ENCODE measurements at regions of chr2 and their contacts with region 1.

Region 1: GRCh38 chr2:38146275-38146906 is 70.4 kb upstream of the CYP1B1 start:
- DNase-seq: peak; percentile 86
- H3K4me3 Mint-ChIP-seq: peak overlapping the region; percentile 20
- H3K27ac Mint-ChIP-seq: no peak overlapping the region
- H3K4me1 Mint-ChIP-seq: peaks cover 5% of the 10 kb centered on the region
- H3K27me3 Mint-ChIP-seq: no peaks in the 10 kb centered on the region
- CTCF ChIP-seq: no peak

Region 2: DNA sequence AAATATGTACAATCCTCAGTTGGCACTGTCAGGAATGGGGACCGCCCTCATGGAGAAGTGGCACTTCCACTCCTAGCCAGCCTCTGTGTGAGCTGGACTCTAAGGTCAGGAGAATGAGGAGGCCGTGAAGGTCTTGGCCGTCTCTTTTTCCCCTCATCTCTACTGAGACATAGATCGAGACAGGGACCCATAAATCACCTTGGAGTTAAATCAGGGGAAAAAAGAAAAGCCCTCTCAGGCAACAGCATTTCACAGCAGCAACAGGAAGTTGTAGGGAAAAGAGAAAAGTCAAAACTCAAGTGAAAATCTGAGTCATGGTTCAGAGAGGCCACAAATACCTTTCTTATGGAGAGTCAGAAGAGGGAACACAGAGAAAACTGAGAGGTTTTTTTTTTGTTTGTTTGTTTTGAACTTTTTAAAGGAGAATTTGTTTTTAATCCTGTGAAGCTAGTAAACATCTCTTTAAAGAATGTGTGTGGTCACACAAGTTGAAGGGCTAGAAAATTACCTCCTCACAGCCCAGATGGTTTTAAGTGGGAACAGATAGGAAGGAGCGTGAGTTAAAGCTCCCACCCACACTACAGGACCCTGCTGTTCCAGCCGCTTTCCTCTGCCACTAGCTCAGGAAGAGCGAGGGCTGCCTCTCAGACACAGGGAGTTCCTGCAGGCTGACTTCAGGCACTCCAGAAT is 39.8 kb before region 1 on chr2:
- CTCF ChIA-PET with region 1: no interaction called
- POLR2A ChIA-PET with region 1: interaction called, 21 read pairs
- intact Hi-C with region 1: no loop called
- DNase-seq: no peak
- H3K4me3 Mint-ChIP-seq: no peak overlapping the region
- H3K27ac Mint-ChIP-seq: peak overlapping the region; percentile 80
- H3K4me1 Mint-ChIP-seq: peaks cover 26% of the 10 kb centered on the region
- H3K27me3 Mint-ChIP-seq: no peaks in the 10 kb centered on the region
- CTCF ChIP-seq: no peak

Region 3: DNA sequence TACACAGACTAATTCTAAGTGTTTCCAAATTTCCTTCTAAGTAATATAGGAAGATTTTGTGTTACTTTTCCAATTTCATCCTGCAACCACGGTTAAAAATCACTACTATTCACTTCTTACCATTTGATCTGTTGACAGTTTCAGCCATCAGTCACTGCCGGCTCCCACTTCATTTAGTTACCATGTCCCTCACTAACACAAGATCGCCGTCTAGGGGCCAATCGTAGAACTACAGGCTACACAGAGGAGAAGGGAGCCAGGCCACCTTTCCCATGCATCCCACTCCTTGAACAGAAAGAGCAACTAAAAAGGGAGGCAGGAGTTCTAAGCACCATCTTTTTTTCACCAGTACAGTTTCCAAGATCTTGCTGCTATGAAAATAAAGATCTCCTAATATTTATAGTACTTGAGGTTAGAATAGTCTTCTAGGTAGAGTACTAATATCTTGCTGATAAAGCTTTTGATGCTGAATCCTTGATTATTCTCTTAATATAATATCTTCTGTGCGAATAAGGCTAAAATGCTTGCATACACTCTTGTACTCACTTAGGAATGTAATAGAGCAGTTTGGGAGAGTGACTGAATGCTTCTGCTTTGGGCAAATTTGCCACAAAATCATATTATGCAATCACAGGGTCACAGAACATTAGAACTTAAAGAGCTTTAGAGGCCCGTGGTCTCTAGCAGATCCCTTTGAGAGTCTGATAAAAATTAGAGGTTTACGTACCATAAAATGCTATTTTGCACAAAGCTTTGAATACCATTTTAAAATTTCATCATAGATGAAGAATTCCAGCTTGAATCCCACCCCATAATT is 31.0 kb before region 1 on chr2:
- CTCF ChIA-PET with region 1: interaction called, 4 read pairs
- POLR2A ChIA-PET with region 1: interaction called, 14 read pairs
- intact Hi-C with region 1: loop called (anchors 2 kb)
- DNase-seq: peak; percentile 94
- H3K4me3 Mint-ChIP-seq: no peak overlapping the region
- H3K27ac Mint-ChIP-seq: no peak overlapping the region
- H3K4me1 Mint-ChIP-seq: peaks cover 28% of the 10 kb centered on the region
- H3K27me3 Mint-ChIP-seq: no peaks in the 10 kb centered on the region
- CTCF ChIP-seq: peak; percentile 96

Region 4: DNA sequence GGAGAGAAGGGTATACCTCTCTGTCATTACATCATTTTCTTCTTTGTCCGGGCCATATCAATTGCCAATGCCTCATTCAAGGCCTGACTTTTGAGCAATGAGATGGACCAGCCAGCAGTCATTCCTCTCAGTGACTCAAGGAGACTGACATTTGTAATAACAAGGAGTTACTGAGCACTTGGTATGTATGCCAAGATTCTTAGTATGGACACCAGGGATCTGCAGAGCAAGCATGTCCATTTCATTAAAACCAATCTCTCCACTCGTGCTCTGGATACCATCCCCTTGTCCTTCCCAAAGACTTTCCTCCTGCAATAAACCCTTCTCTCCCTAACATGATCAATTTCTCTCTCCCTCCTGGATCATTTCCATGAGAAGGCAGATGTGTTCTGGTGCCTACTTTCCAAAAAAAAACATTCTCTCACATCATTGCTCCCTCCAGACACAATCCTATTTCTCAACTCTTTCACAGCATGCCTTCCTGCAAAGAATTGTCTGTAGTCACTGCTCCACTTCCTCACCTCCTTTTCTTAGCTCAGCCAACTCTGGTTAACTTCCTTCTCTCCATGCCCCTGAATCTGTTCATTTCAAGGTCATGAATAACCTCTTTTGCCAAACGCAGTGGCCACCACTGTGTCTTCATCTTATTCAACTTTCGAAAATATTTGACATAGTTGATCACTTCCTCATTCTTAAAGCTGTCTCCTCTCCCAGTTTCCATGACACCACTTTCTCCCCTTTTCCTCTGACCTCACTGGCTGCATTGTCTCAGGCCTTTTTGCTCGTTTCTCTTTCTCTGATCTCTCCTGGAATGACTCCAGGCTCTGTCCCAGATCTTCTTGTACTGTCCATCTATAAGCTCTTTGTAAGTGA is 32.4 kb after region 1 on chr2:
- CTCF ChIA-PET with region 1: interaction called, 3 read pairs
- POLR2A ChIA-PET with region 1: interaction called, 168 read pairs
- intact Hi-C with region 1: loop called (anchors 1 kb)
- DNase-seq: peak; percentile 83
- H3K4me3 Mint-ChIP-seq: peak overlapping the region; percentile 12
- H3K27ac Mint-ChIP-seq: peak overlapping the region; percentile 60
- H3K4me1 Mint-ChIP-seq: peaks cover 48% of the 10 kb centered on the region
- H3K27me3 Mint-ChIP-seq: no peaks in the 10 kb centered on the region
- CTCF ChIP-seq: no peak

Region 5: GRCh38 chr2:38185012-38185491 is 38.7 kb after region 1 on chr2:
- CTCF ChIA-PET with region 1: interaction called, 4 read pairs
- POLR2A ChIA-PET with region 1: interaction called, 168 read pairs
- intact Hi-C with region 1: no loop called
- DNase-seq: peak; percentile 31
- H3K4me3 Mint-ChIP-seq: no peak overlapping the region
- H3K27ac Mint-ChIP-seq: no peak overlapping the region
- H3K4me1 Mint-ChIP-seq: peaks cover 15% of the 10 kb centered on the region
- H3K27me3 Mint-ChIP-seq: no peaks in the 10 kb centered on the region
- CTCF ChIP-seq: no peak

Region 6: GRCh38 chr2:40127890-40128557 is 1981.6 kb after region 1 on chr2:
- CTCF ChIA-PET with region 1: no interaction called
- POLR2A ChIA-PET with region 1: no interaction called
- intact Hi-C with region 1: no loop called
- DNase-seq: no peak
- H3K4me3 Mint-ChIP-seq: no peak overlapping the region
- H3K27ac Mint-ChIP-seq: no peak overlapping the region
- H3K4me1 Mint-ChIP-seq: no peaks in the 10 kb centered on the region
- H3K27me3 Mint-ChIP-seq: no peaks in the 10 kb centered on the region
- CTCF ChIP-seq: no peak

Measured in MCF 10A (cell line).